A673 (cell line): ENCODE measurements at regions of chr7 and their contacts with region 1.

Region 1: DNA sequence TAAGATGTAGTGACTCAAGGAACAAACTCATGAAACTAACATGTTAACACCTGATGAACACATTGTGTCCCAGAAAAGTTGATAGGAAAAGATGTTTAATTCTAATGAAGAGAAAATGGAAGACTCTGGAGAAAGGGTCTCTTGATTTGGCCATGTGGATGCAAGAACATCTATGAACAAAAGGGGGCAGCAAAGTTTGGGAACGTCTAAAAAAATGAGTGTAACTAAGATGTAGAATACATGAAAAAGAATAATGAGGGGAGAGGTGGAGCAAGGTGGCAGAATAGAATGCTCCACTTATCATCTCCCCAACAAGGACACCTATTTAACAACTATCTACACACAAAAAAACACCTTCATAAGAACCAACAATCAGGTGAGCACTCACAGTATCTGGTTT is 805.1 kb downstream of the TNS3 start:
- DNase-seq: peak; percentile 66
- H3K4me3 ChIP-seq: no peak overlapping the region
- H3K27ac ChIP-seq: no peak overlapping the region
- H3K4me1 ChIP-seq: no peaks in the 10 kb centered on the region
- H3K27me3 ChIP-seq: no peaks in the 10 kb centered on the region
- CTCF ChIP-seq: peak; percentile 69

Region 2: GRCh38 chr7:46512891-46513645 is 263.7 kb before region 1 on chr7:
- CTCF ChIA-PET with region 1: no interaction called
- POLR2A ChIA-PET with region 1: no interaction called
- intact Hi-C with region 1: no loop called
- DNase-seq: no peak
- H3K4me3 ChIP-seq: no peak overlapping the region
- H3K27ac ChIP-seq: no peak overlapping the region
- H3K4me1 ChIP-seq: no peaks in the 10 kb centered on the region
- H3K27me3 ChIP-seq: no peaks in the 10 kb centered on the region
- CTCF ChIP-seq: no peak

Region 3: DNA sequence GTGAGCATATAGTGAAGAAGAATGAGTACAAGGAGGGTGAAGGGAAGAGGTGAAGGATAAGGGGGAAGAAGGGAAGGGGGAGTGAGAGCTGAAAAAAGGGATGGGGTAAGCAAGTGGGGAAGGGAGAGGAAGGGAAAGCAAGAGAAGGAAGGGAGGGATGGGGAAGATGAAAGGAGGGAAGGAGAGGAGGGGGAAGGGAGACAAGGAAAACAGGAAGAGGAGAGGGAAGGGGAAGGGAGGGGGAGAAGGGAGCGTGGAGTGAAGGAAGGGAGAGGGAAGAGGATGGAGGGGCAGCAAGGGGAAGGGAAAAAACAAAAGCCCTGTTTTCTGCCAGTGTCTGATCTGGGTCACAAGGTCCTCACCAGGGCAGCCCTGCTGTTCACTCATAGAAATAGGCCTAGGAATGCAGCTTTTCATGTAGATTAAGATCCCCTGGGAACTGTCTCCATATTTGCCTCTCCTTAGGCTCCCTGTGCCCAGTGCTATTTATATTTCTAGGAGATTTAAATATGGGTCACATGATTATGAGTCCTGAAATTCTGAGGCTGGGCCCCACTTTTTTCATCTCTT is 14.3 kb after region 1 on chr7:
- CTCF ChIA-PET with region 1: no interaction called
- POLR2A ChIA-PET with region 1: no interaction called
- intact Hi-C with region 1: no loop called
- DNase-seq: no peak
- H3K4me3 ChIP-seq: no peak overlapping the region
- H3K27ac ChIP-seq: no peak overlapping the region
- H3K4me1 ChIP-seq: no peaks in the 10 kb centered on the region
- H3K27me3 ChIP-seq: no peaks in the 10 kb centered on the region
- CTCF ChIP-seq: no peak

Region 4: GRCh38 chr7:46932676-46933424 is 156.1 kb after region 1 on chr7:
- CTCF ChIA-PET with region 1: no interaction called
- POLR2A ChIA-PET with region 1: no interaction called
- intact Hi-C with region 1: loop called (anchors 2 kb)
- DNase-seq: peak; percentile 91
- H3K4me3 ChIP-seq: peak overlapping the region; percentile 8
- H3K27ac ChIP-seq: peak overlapping the region; percentile 92
- H3K4me1 ChIP-seq: peaks cover 25% of the 10 kb centered on the region
- H3K27me3 ChIP-seq: no peaks in the 10 kb centered on the region
- CTCF ChIP-seq: peak; percentile 56; the same call in 1 of the 2 replicates

Region 5: GRCh38 chr7:47088329-47089067 is 311.7 kb after region 1 on chr7:
- CTCF ChIA-PET with region 1: no interaction called
- POLR2A ChIA-PET with region 1: no interaction called
- intact Hi-C with region 1: loop called (anchors 2 kb)
- DNase-seq: peak; percentile 76
- H3K4me3 ChIP-seq: no peak overlapping the region
- H3K27ac ChIP-seq: no peak overlapping the region
- H3K4me1 ChIP-seq: no peaks in the 10 kb centered on the region
- H3K27me3 ChIP-seq: no peaks in the 10 kb centered on the region
- CTCF ChIP-seq: peak; percentile 87